ENCODE measurements at regions of chr5 and their contacts with region 1.

Region 1: GRCh38 chr5:134503088-134503946 is 22.2 kb upstream of the JADE2 start:
- DNase-seq: peak; percentile 93
- ATAC-seq: peak; percentile 72
- H3K4me3 ChIP-seq: peak overlapping the region; percentile 27 to 62 (median 41)
- H3K27ac ChIP-seq: peak overlapping the region; percentile 89
- H3K4me1 ChIP-seq: peaks cover 71% of the 10 kb centered on the region
- H3K27me3 ChIP-seq: no peaks in the 10 kb centered on the region; a peak in 1 of 5 replicates
- CTCF ChIP-seq: peak; percentile 34
- EP300 ChIP-seq: no peak; a peak in 1 of 4 replicates
- POLR2A ChIP-seq: peak in 1 of 2 experiments; percentile 78; a peak in 2 of 4 replicates
- RAD21 ChIP-seq: peak; percentile 30; the same call in 1 of the 2 replicates

Region 2: DNA sequence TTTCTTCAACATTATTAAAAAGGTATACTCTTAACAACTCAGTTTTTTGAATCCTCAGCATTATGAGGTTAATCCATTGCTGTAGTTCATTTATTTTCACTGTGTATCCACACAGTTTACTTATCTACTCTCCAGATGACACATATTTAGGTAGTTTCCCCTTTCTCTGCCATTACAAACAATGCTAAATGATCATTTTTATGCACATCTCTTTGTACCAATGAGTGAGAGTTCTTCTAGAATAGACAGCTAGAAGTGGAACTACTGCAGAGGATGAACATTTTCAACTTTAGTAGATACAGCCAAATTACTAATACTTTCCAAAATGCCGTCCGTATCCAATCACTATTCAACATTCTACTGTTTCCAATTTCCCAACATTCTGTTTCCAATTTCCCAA is 1551.4 kb before region 1 on chr5:
- CTCF ChIA-PET with region 1: no interaction called
- POLR2A ChIA-PET with region 1: no interaction called
- in situ Hi-C with region 1: no loop called
- intact Hi-C with region 1: no loop called
- DNase-seq: no peak
- ATAC-seq: no peak
- H3K4me3 ChIP-seq: no peak overlapping the region
- H3K27ac ChIP-seq: no peak overlapping the region
- H3K4me1 ChIP-seq: peaks cover 41% of the 10 kb centered on the region
- H3K27me3 ChIP-seq: no peaks in the 10 kb centered on the region
- CTCF ChIP-seq: no peak
- EP300 ChIP-seq: no peak
- POLR2A ChIP-seq: no peak
- RAD21 ChIP-seq: no peak

Region 3: DNA sequence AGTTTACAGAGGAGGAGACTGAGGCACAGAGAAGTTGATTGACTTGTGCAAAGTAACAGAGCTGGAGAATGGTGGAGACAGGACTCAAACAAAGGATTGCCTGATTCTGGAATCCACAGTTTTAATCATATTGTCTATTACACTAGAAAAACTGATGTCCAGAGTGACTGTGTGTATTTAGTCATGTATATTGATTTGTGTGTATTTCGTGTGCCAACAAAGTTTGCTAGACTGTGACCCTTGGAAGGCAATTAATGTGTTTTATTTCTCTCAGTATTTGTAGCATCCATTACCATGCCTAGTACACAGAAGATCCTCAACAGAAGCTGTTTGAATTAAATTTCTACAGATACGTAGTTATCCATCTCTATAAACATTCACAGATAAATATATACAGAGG is 16.7 kb after region 1 on chr5:
- CTCF ChIA-PET with region 1: no interaction called
- POLR2A ChIA-PET with region 1: interaction called, 85 read pairs
- in situ Hi-C with region 1: no loop called
- intact Hi-C with region 1: no loop called
- DNase-seq: no peak
- ATAC-seq: no peak
- H3K4me3 ChIP-seq: no peak overlapping the region
- H3K27ac ChIP-seq: no peak overlapping the region
- H3K4me1 ChIP-seq: peaks cover 16% of the 10 kb centered on the region
- H3K27me3 ChIP-seq: no peaks in the 10 kb centered on the region; a peak in 1 of 5 replicates
- CTCF ChIP-seq: no peak
- EP300 ChIP-seq: no peak
- POLR2A ChIP-seq: no peak
- RAD21 ChIP-seq: no peak

Region 4: DNA sequence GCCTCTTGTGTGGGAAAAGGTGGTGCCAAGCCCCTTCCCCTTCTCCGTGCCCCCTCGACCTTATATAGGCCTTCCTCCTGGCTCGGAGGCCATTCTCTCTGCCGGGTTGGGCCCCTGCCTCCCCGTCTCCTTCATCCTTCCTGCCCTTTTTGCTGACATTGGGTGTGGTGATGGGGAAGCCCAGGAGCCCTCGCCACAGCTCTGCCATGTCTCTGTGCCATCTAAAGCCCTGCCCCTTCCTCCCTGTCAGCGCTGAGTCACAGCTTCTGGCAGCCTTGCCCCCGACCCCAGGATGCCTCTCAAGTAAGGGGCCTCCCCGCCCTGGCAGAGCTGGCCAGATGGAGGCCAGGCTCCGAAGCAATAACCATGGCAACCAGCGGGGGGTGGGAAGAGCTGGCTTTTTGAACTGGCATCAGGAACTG is 52.6 kb after region 1 on chr5:
- CTCF ChIA-PET with region 1: no interaction called
- POLR2A ChIA-PET with region 1: no interaction called
- in situ Hi-C with region 1: no loop called
- intact Hi-C with region 1: no loop called
- DNase-seq: peak; percentile 9
- ATAC-seq: peak; percentile 73
- H3K4me3 ChIP-seq: no peak overlapping the region
- H3K27ac ChIP-seq: no peak overlapping the region
- H3K4me1 ChIP-seq: no peaks in the 10 kb centered on the region; the same call in 1 of the 2 replicates
- H3K27me3 ChIP-seq: no peaks in the 10 kb centered on the region
- CTCF ChIP-seq: peak; percentile 11; the same call in 1 of the 2 replicates
- EP300 ChIP-seq: no peak
- POLR2A ChIP-seq: no peak
- RAD21 ChIP-seq: no peak

Region 5: DNA sequence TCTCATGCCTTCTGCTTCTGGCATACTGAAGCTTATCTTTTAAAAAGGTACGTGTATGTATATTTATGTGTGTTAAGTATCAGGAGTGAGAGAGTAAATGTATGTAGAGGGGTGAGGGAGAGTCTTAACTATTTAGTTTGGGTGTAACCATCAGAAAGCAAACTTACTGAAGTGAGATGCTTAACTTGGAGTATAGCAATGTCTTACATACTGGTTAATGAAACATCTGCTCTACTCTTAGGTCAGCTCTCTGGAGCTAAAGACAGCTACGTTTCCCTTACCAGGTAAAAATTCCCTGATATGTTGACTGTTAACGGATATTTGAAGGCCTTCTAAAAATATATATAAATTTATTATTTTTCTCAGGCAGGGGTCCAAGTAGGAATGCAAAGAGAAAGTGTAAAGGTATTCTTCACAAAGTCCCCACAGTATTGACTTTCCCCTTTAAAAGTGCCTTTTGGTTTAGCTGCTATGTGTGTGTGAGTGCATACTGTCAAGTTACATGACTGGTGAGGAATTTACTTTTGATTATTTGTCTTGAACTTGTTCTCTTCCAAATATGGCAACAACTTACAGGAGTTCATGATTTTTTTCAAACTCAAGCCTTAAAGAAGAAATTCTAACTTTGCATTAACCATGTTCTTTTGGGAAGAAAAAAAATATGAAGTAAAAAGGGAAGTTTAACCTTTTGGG is 330.2 kb after region 1 on chr5:
- CTCF ChIA-PET with region 1: no interaction called
- POLR2A ChIA-PET with region 1: no interaction called
- in situ Hi-C with region 1: no loop called
- intact Hi-C with region 1: no loop called
- DNase-seq: no peak
- ATAC-seq: no peak
- H3K4me3 ChIP-seq: no peak overlapping the region
- H3K27ac ChIP-seq: no peak overlapping the region
- H3K4me1 ChIP-seq: peaks cover 24% of the 10 kb centered on the region
- H3K27me3 ChIP-seq: no peaks in the 10 kb centered on the region
- CTCF ChIP-seq: no peak
- EP300 ChIP-seq: no peak
- POLR2A ChIP-seq: no peak
- RAD21 ChIP-seq: no peak